ENCODE measurements at regions of chr10 and their contacts with region 1.

Region 1: GRCh38 chr10:58384999-58385783 is at the start of gene TFAM:
- DNase-seq: peak; percentile 92
- H3K4me3 Mint-ChIP-seq: peak within 1 kb of the TSS; percentile 99
- H3K27ac Mint-ChIP-seq: peak within 1 kb of the TSS; percentile 98
- H3K4me1 Mint-ChIP-seq: peaks cover 37% of the 10 kb centered on the region
- H3K27me3 Mint-ChIP-seq: peaks cover 6% of the 10 kb centered on the region
- total RNA-seq, gene TFAM: 85.0 and 86.6 TPM in 2 replicates

Region 2: GRCh38 chr10:58177362-58177947 is 207.7 kb before region 1 on chr10:
- intact Hi-C with region 1: loop called (anchors 1 kb)
- DNase-seq: no peak
- H3K4me3 Mint-ChIP-seq: no peak overlapping the region
- H3K27ac Mint-ChIP-seq: no peak overlapping the region
- H3K4me1 Mint-ChIP-seq: no peaks in the 10 kb centered on the region
- H3K27me3 Mint-ChIP-seq: peaks cover 11% of the 10 kb centered on the region

Region 3: DNA sequence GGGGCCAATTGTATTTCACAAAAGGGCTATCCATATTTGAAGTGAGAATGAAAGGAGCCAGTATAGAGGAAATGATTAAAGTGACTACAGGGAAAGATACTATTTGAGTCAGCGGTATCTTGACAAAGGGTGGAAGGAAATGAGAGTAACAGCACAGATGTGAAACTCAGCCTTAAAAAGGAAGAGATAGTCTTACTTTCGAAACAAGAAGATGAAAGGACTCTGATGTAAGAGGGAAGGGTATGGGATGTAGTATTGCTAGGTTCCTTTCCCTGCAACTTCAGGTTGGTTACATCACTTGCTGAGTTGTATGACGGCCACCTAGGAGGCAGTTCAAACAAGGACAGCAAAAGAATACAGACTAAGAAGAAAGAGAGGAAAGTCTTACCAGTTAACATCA is 102.6 kb before region 1 on chr10:
- intact Hi-C with region 1: loop called (anchors 5 kb)
- DNase-seq: peak; percentile 32
- H3K4me3 Mint-ChIP-seq: peak overlapping the region; percentile 38
- H3K27ac Mint-ChIP-seq: peak overlapping the region; percentile 1
- H3K4me1 Mint-ChIP-seq: peaks cover 31% of the 10 kb centered on the region
- H3K27me3 Mint-ChIP-seq: no peaks in the 10 kb centered on the region

Region 4: DNA sequence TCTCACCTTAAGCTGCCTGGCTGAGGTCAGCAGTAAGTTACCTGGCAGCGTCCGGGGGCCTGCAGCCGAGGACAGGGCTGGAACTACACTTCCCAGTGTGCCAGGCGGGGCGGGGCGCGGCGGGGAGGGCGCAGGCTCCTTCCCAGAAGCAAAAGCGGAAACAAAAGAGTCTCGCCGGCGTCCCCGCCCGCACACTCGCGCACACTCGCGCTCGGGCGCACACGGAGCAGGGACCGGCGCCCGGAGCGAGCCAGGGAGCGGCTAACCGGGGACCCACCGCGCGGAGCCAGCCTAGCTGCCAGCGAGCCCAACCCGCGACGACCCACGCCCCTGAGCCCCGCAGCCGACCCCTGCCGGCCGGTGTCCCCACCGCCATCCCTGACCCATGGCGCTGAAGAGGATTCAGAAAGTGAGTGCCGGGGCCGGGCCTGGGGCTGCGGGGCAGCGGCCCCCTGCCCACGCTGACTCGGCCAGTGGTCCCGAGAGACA is 50.3 kb before region 1 on chr10 and contains the start of gene UBE2D1:
- intact Hi-C with region 1: loop called (anchors 1 kb)
- DNase-seq: peak; percentile 69
- H3K4me3 Mint-ChIP-seq: peak within 1 kb of the TSS; percentile 99
- H3K27ac Mint-ChIP-seq: peak within 1 kb of the TSS; percentile 81
- H3K4me1 Mint-ChIP-seq: peaks cover 23% of the 10 kb centered on the region
- H3K27me3 Mint-ChIP-seq: peaks cover 16% of the 10 kb centered on the region
- total RNA-seq, gene UBE2D1: 14.8 and 14.9 TPM in 2 replicates

Region 5: GRCh38 chr10:58513188-58514110 is 128.3 kb after region 1 on chr10:
- intact Hi-C with region 1: loop called (anchors 10 kb)
- DNase-seq: no peak
- H3K4me3 Mint-ChIP-seq: peak overlapping the region; percentile 68
- H3K27ac Mint-ChIP-seq: no peak overlapping the region
- H3K4me1 Mint-ChIP-seq: peaks cover 16% of the 10 kb centered on the region
- H3K27me3 Mint-ChIP-seq: peaks cover 33% of the 10 kb centered on the region

Measured in activated T-helper 2 cell treated with anti-CD3 and anti-CD28 coated beads, Interferon-gamma antibody, Interleukin-2, Interleukin-4, amounts not matched to agents 10 μg/mL and 5 μg/mL and 100 μg/mL, durations not matched to agents 14 hours and 24 hours and 36 hours (primary cell).